Heart left ventricle (tissue), 16 donors: ENCODE measurements at regions of chr18 and their contacts with region 1.

Region 1: GRCh38 chr18:47184419-47185050 is 8.4 kb upstream of the IER3IP1 start:
- DNase-seq: no peak
- ATAC-seq: peak in 1 of 4 donors; percentile 38
- H3K4me3 ChIP-seq: no peak overlapping the region
- H3K27ac ChIP-seq: no peak overlapping the region
- H3K4me1 ChIP-seq: peaks cover 0 to 7% (median 0%) of the 10 kb centered on the region in 12 donors
- H3K27me3 ChIP-seq: peaks cover 0 to 14% (median 0%) of the 10 kb centered on the region in 9 donors
- CTCF ChIP-seq: no peak
- POLR2A ChIP-seq: no peak

Region 2: DNA sequence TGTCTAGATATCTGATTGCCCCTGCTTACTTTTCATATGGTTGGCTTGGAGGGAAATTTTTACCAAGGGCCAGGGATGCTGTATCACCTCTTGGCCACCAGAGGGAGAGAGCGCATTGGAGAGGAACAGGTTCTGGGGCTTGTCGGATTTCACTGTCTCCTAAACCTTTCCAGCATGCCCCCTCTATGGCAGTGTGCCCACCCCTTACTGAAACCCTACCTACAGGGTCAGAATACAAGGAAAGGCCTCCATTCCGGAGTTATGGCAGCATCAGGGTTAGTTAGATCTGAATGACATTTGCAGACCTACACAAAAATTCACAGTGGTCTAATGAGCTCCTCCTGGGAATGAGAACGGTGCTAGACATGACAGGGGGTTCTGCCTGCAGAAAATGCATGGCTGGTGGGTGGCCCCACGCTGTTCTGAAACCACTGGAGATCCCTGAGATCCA is 1563.4 kb before region 1 on chr18:
- intact Hi-C with region 1: loop called in 1 of 10 experiments (anchors 10 kb)
- DNase-seq: peak in 2 of 5 donors; percentile 19 to 32
- ATAC-seq: peak in 1 of 4 donors; percentile 27
- H3K4me3 ChIP-seq: no peak overlapping the region
- H3K27ac ChIP-seq: no peak overlapping the region
- H3K4me1 ChIP-seq: peaks cover 0 to 26% (median 4%) of the 10 kb centered on the region in 12 donors
- H3K27me3 ChIP-seq: no peaks in the 10 kb centered on the region
- CTCF ChIP-seq: peak; percentile 79 to 92 (median 88)
- POLR2A ChIP-seq: no peak